Endothelial cell of umbilical vein (primary cell): ENCODE measurements at regions of chr12 and their contacts with region 1.

Region 1: GRCh38 chr12:5964913-5965900 is 20.1 kb upstream of the ANO2 start:
- DNase-seq: peak; percentile 37
- H3K4me3 ChIP-seq: no peak overlapping the region
- H3K27ac ChIP-seq: no peak overlapping the region
- H3K4me1 ChIP-seq: peaks cover 4% of the 10 kb centered on the region
- H3K27me3 ChIP-seq: no peaks in the 10 kb centered on the region
- CTCF ChIP-seq: no peak
- POLR2A ChIP-seq: peak; percentile 76

Region 2: GRCh38 chr12:5977556-5977955 is 12.3 kb after region 1 on chr12:
- CTCF ChIA-PET with region 1: no interaction called
- POLR2A ChIA-PET with region 1: no interaction called
- dilution Hi-C with region 1: no loop called
- intact Hi-C with region 1: no loop called
- DNase-seq: no peak
- H3K4me3 ChIP-seq: no peak overlapping the region
- H3K27ac ChIP-seq: no peak overlapping the region
- H3K4me1 ChIP-seq: peaks cover 2% of the 10 kb centered on the region
- H3K27me3 ChIP-seq: no peaks in the 10 kb centered on the region
- CTCF ChIP-seq: no peak
- POLR2A ChIP-seq: no peak

Region 3: GRCh38 chr12:5988659-5989116 is 23.5 kb after region 1 on chr12:
- CTCF ChIA-PET with region 1: interaction called, 12 read pairs
- POLR2A ChIA-PET with region 1: no interaction called
- dilution Hi-C with region 1: no loop called
- intact Hi-C with region 1: no loop called
- DNase-seq: peak; percentile 73
- H3K4me3 ChIP-seq: no peak overlapping the region
- H3K27ac ChIP-seq: no peak overlapping the region
- H3K4me1 ChIP-seq: no peaks in the 10 kb centered on the region
- H3K27me3 ChIP-seq: no peaks in the 10 kb centered on the region
- CTCF ChIP-seq: peak; percentile 91 to 93
- POLR2A ChIP-seq: no peak